ENCODE measurements at regions of chr3 and their contacts with region 1.

Region 1: GRCh38 chr3:126245811-126246727 is 65.7 kb upstream of the ALDH1L1 start:
- DNase-seq: no peak
- H3K4me3 Mint-ChIP-seq: no peak overlapping the region
- H3K27ac Mint-ChIP-seq: no peak overlapping the region
- H3K4me1 Mint-ChIP-seq: no peaks in the 10 kb centered on the region
- H3K27me3 Mint-ChIP-seq: no peaks in the 10 kb centered on the region

Region 2: DNA sequence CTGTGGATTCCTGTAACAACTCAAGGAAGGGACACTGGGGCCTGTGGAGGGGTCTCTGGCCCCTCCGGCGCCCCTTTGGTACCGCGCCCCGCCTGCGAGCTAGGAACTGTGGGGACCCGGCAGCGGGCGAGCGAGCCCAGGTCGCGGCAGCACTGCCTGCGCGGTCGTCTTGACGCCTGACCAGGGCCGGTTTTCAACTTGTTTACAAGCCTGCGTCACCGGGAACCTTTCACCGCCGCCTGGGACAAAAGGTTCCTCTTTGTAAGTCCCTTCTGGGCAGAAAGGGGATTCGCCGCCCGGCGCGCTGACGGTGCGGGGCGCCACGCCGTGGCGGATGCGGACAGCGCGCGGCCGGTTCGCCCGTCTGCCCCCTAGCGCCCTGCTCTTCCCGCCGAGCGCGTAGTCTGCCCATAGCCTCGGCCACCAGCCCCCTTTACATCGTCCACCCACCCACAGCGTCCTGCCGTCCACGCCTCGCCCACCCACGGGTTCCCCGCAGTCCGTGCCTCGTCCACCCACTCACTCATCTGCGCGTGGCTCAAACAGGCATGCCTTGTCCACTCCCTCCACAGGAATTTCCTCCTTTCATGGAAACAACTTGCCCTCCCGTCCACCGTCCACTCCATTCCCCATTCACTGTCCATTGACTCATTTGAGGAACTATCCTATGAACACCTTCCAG is 143.2 kb after region 1 on chr3:
- intact Hi-C with region 1: loop called (anchors 1 kb)
- DNase-seq: peak; percentile 3
- H3K4me3 Mint-ChIP-seq: no peak overlapping the region
- H3K27ac Mint-ChIP-seq: no peak overlapping the region
- H3K4me1 Mint-ChIP-seq: peaks cover 5% of the 10 kb centered on the region
- H3K27me3 Mint-ChIP-seq: peaks cover 30% of the 10 kb centered on the region